Transverse colon (tissue), 4 donors: ENCODE measurements at regions of chr10 and their contacts with region 1.

Region 1: GRCh38 chr10:27986821-27987220 is 12.1 kb downstream of the ODAD2 start:
- DNase-seq: no peak
- H3K4me3 ChIP-seq: no peak overlapping the region
- H3K27ac ChIP-seq: no peak overlapping the region
- H3K4me1 ChIP-seq: no peaks in the 10 kb centered on the region
- H3K27me3 ChIP-seq: no peaks in the 10 kb centered on the region
- CTCF ChIP-seq: no peak
- EP300 ChIP-seq: no peak
- POLR2A ChIP-seq: no peak

Region 2: GRCh38 chr10:27568196-27569175 is 418.3 kb before region 1 on chr10:
- in situ Hi-C with region 1: no loop called
- intact Hi-C with region 1: no loop called
- DNase-seq: no peak
- H3K4me3 ChIP-seq: no peak overlapping the region
- H3K27ac ChIP-seq: no peak overlapping the region
- H3K4me1 ChIP-seq: no peaks in the 10 kb centered on the region
- H3K27me3 ChIP-seq: no peaks in the 10 kb centered on the region
- CTCF ChIP-seq: no peak
- EP300 ChIP-seq: no peak
- POLR2A ChIP-seq: no peak

Region 3: DNA sequence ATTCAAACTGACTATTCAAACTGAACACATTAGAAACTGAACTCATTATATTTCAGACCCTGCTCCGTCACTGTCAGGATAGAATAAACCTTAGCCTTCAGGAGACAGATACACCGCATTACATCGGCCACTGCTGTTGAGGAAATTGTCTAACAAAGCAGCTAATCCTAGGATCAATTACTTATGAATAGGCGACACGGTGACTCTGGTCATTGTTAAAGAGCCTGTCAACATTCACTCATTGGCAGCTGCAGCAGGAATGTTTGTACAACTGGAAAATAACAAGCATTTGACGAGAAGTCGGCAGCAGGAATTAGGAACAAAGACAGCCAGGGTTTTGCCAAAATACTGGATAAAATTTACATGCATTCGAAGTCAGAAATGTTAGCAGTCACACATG is 129.2 kb before region 1 on chr10:
- in situ Hi-C with region 1: no loop called
- intact Hi-C with region 1: no loop called
- DNase-seq: no peak
- H3K4me3 ChIP-seq: no peak overlapping the region
- H3K27ac ChIP-seq: no peak overlapping the region
- H3K4me1 ChIP-seq: no peaks in the 10 kb centered on the region
- H3K27me3 ChIP-seq: no peaks in the 10 kb centered on the region
- CTCF ChIP-seq: no peak
- EP300 ChIP-seq: no peak
- POLR2A ChIP-seq: no peak

Region 4: GRCh38 chr10:28008054-28008453 is 21.2 kb after region 1 on chr10:
- in situ Hi-C with region 1: no loop called
- intact Hi-C with region 1: loop called (anchors 1 kb)
- DNase-seq: no peak
- H3K4me3 ChIP-seq: no peak overlapping the region
- H3K27ac ChIP-seq: no peak overlapping the region
- H3K4me1 ChIP-seq: no peaks in the 10 kb centered on the region
- H3K27me3 ChIP-seq: no peaks in the 10 kb centered on the region
- CTCF ChIP-seq: no peak
- EP300 ChIP-seq: no peak
- POLR2A ChIP-seq: no peak